Panc1 (cell line): ENCODE measurements at regions of chr15 and their contacts with region 1.

Region 1: DNA sequence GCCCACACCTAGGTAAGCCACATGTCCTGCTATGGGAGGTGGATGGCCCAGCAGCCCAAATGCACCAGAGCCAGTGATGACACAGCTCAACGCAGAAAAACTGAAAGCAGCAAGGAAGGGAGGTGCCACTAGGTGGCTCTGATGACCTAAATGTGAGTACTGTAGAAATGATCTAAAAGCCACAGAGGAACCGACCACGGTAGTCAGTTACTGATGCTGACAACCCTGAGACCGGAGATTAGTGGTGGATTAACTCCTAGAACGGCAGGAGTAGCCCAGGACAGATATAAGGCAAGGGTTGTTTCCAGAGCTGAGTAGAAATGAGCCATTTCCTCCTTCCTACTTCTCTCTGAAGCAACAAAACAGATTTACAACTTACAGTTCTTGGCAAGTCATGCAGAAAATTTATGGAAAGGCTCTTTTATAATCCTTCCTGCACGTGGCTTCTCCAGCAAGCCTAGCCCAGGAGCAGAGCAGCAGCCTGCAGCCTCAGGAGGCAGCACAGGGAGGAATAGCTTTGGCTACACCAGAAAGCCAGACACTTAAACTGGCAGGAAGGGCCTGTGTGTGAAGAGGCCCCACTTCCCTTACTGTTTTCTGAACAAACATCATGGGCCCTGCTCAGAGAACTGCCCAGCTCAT is 13.1 kb downstream of the FBXL22 start:
- DNase-seq: peak; percentile 64
- ATAC-seq: peak; percentile 95
- H3K4me3 ChIP-seq: no peak overlapping the region
- H3K27ac ChIP-seq: peak overlapping the region; percentile 25; the same call in 1 of the 2 replicates
- H3K4me1 ChIP-seq: peaks cover 7% of the 10 kb centered on the region
- H3K27me3 ChIP-seq: no peaks in the 10 kb centered on the region
- CTCF ChIP-seq: peak; percentile 90

Region 2: DNA sequence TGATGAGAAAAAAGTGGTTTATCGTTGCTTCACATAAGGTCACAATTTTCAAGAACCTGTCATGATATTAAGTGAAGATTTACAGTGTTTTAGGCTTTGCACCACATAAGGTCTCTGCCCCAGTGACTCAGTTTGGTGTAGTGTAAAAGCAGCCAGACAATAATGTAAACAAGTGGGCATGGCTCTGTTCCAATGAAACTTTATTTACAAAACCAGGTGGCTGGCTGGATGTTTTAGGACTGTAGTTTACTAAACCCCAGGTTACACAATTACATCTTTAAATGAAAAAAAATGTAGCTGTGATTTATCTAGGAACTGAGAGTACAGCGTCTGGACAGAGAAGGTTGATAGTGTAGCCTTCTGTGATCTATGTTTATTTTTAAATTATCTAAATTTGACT is 22.8 kb before region 1 on chr15:
- CTCF ChIA-PET with region 1: no interaction called
- POLR2A ChIA-PET with region 1: no interaction called
- in situ Hi-C with region 1: no loop called
- intact Hi-C with region 1: no loop called
- DNase-seq: no peak
- ATAC-seq: no peak
- H3K4me3 ChIP-seq: no peak overlapping the region
- H3K27ac ChIP-seq: no peak overlapping the region
- H3K4me1 ChIP-seq: peaks cover 9% of the 10 kb centered on the region; the same call in 1 of the 2 replicates
- H3K27me3 ChIP-seq: no peaks in the 10 kb centered on the region
- CTCF ChIP-seq: no peak

Region 3: DNA sequence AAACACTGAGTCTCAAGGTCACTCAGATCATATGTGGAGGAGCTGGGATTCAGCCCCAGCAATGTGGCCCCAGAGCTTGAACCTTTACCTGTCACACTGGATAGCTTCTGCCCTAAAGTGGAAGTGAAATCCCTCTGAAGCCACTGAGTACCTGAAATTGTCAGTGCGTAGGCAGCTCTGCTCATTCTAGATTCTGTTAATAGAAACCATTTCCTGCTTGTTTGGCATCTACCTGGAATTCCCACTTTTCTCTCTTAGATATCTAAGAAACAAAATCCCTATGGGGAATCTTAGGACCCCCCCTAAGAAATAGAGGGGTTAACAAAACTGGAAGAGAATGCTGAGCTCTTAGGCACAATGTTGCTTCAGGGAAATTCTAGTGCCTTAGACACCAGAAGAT is 16.6 kb after region 1 on chr15:
- CTCF ChIA-PET with region 1: interaction called, 10 read pairs
- POLR2A ChIA-PET with region 1: no interaction called
- in situ Hi-C with region 1: no loop called
- intact Hi-C with region 1: no loop called
- DNase-seq: no peak
- ATAC-seq: no peak
- H3K4me3 ChIP-seq: no peak overlapping the region
- H3K27ac ChIP-seq: no peak overlapping the region
- H3K4me1 ChIP-seq: no peaks in the 10 kb centered on the region
- H3K27me3 ChIP-seq: no peaks in the 10 kb centered on the region
- CTCF ChIP-seq: no peak